Endothelial cell of umbilical vein (primary cell): ENCODE measurements at regions of chr3 and their contacts with region 1.

Region 1: GRCh38 chr3:133943639-133944141 is 48.0 kb upstream of the RAB6B start:
- DNase-seq: peak; percentile 87
- H3K4me3 ChIP-seq: no peak overlapping the region
- H3K27ac ChIP-seq: peak overlapping the region; percentile 88
- H3K4me1 ChIP-seq: peaks cover 66% of the 10 kb centered on the region
- H3K27me3 ChIP-seq: no peaks in the 10 kb centered on the region
- CTCF ChIP-seq: no peak
- POLR2A ChIP-seq: peak; percentile 31

Region 2: GRCh38 chr3:133644768-133645167 is 298.9 kb before region 1 on chr3:
- CTCF ChIA-PET with region 1: no interaction called
- POLR2A ChIA-PET with region 1: no interaction called
- dilution Hi-C with region 1: no loop called
- intact Hi-C with region 1: no loop called
- DNase-seq: peak; percentile 89
- H3K4me3 ChIP-seq: no peak overlapping the region
- H3K27ac ChIP-seq: peak overlapping the region; percentile 36
- H3K4me1 ChIP-seq: peaks cover 37% of the 10 kb centered on the region
- H3K27me3 ChIP-seq: no peaks in the 10 kb centered on the region
- CTCF ChIP-seq: no peak
- POLR2A ChIP-seq: no peak

Region 3: DNA sequence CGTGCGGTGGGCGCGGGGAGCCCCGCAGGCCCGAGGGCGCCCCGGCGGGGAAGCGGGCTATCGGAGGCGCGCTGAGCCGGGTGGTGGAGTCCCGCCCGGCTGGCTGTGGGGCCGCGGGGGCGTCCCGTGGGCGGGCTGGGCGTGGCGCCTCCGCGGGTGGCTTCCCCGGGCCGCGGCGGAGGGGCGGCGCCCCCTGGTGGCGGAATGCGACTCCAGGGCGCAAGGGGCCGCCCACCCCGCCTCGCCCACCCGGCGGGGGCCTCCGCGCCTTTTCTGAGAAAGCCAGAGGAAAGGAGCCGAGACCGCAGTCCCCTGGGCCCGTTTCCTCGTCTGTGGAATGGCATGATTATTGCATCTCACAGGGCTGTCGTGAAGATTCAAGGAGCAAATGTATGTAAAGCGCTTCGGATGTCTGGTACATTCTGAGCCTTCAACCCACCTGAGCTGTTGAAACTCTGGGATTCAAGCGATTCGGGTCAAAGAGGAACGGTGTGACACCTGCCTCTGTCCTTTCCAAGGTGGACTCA is 16.1 kb before region 1 on chr3:
- CTCF ChIA-PET with region 1: interaction called, 13 read pairs
- POLR2A ChIA-PET with region 1: no interaction called
- dilution Hi-C with region 1: no loop called
- intact Hi-C with region 1: no loop called
- DNase-seq: peak; percentile 37
- H3K4me3 ChIP-seq: peak overlapping the region; percentile 32 to 53 (median 39)
- H3K27ac ChIP-seq: no peak overlapping the region
- H3K4me1 ChIP-seq: peaks cover 7% of the 10 kb centered on the region
- H3K27me3 ChIP-seq: no peaks in the 10 kb centered on the region
- CTCF ChIP-seq: peak; percentile 70 to 87
- POLR2A ChIP-seq: no peak

Region 4: GRCh38 chr3:133964547-133964946 is 20.9 kb after region 1 on chr3:
- CTCF ChIA-PET with region 1: no interaction called
- POLR2A ChIA-PET with region 1: no interaction called
- dilution Hi-C with region 1: no loop called
- intact Hi-C with region 1: no loop called
- DNase-seq: no peak
- H3K4me3 ChIP-seq: no peak overlapping the region
- H3K27ac ChIP-seq: no peak overlapping the region
- H3K4me1 ChIP-seq: peaks cover 15% of the 10 kb centered on the region
- H3K27me3 ChIP-seq: no peaks in the 10 kb centered on the region
- CTCF ChIP-seq: peak; percentile 27 to 31
- POLR2A ChIP-seq: no peak

Region 5: DNA sequence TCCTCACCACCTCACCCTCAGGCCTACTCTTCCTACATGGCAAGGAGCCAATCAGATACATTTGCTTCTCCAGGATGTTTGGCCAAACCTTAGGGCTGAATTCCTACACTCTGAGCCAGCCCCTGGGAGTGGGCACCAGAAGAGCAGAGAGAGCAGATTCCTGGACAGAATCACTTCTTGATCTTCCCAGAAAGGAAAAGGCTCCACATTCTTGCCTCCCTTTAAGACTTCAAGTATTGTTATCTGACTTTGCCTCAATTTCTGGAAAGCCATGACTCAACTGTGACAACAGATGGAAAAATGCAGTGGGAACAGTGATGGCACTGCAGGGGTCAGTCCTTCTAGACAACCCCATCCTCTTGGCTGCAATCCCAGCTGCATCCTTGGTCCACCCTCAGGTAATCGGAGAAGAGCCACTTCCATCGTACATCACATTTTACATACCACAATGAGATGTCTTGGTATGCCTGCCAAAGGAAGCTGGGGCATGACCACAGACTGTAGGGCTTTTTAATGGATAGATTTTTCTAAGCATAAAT is 65.0 kb after region 1 on chr3:
- CTCF ChIA-PET with region 1: no interaction called
- POLR2A ChIA-PET with region 1: interaction called, 3 read pairs
- dilution Hi-C with region 1: no loop called
- intact Hi-C with region 1: loop called (anchors 1 kb)
- DNase-seq: peak; percentile 80
- H3K4me3 ChIP-seq: no peak overlapping the region
- H3K27ac ChIP-seq: peak overlapping the region; percentile 65
- H3K4me1 ChIP-seq: peaks cover 28% of the 10 kb centered on the region
- H3K27me3 ChIP-seq: no peaks in the 10 kb centered on the region
- CTCF ChIP-seq: no peak
- POLR2A ChIP-seq: no peak

Region 6: GRCh38 chr3:134039161-134039862 is 95.6 kb after region 1 on chr3:
- CTCF ChIA-PET with region 1: no interaction called
- POLR2A ChIA-PET with region 1: interaction called, 6 read pairs
- dilution Hi-C with region 1: no loop called
- intact Hi-C with region 1: loop called (anchors 2 kb)
- DNase-seq: no peak
- H3K4me3 ChIP-seq: no peak overlapping the region
- H3K27ac ChIP-seq: no peak overlapping the region
- H3K4me1 ChIP-seq: no peaks in the 10 kb centered on the region
- H3K27me3 ChIP-seq: no peaks in the 10 kb centered on the region
- CTCF ChIP-seq: peak; percentile 15 to 40
- POLR2A ChIP-seq: no peak

Region 7: GRCh38 chr3:134315286-134316106 is 371.8 kb after region 1 on chr3:
- CTCF ChIA-PET with region 1: no interaction called
- POLR2A ChIA-PET with region 1: no interaction called
- dilution Hi-C with region 1: no loop called
- intact Hi-C with region 1: loop called (anchors 2 kb)
- DNase-seq: peak; percentile 85
- H3K4me3 ChIP-seq: peak overlapping the region in 1 of 3 experiments; percentile 0
- H3K27ac ChIP-seq: peak overlapping the region; percentile 87
- H3K4me1 ChIP-seq: peaks cover 39% of the 10 kb centered on the region
- H3K27me3 ChIP-seq: no peaks in the 10 kb centered on the region
- CTCF ChIP-seq: no peak
- POLR2A ChIP-seq: peak; percentile 57

Region 8: DNA sequence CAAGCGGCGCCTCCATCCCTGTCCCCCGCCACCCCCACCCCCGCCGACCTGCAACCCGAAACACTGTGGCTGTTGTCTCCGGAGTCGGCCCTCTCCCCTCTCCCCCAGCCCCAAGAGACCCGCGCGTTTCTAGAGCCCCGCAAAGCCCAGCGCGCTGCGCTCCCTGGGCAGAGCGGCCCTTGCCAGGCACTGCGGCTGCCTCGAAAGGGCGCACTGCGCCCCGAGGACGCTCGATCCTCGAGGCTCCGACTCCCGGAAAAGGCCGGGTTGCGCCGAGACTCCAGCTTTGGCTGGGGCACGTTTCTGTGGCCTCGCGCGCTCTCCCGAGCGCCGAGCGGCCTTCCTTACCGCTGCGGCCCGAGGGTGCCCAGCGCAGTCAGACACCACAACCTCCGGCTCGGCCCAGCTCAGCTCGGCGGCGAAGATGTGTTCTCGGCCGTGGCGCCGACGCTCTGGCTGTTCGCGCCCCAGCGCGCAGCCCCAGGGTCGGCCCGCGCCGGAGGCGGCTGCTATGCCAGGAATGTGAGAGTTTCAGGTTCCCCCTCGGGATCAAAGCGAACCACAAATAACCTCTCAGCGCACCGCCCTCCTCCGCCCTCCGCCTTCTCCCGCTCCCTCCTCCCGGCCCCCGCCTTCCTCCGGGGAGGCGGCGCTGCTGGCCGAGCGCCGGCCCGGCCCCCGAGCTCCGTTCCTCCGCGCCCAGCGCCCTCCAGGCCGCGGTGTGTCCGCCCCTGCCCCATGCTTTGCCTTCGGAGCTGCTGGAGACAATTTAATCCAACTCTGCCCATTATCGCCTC is 430.5 kb after region 1 on chr3 and contains the start of gene AMOTL2:
- CTCF ChIA-PET with region 1: no interaction called
- POLR2A ChIA-PET with region 1: no interaction called
- dilution Hi-C with region 1: no loop called
- intact Hi-C with region 1: loop called (anchors 2 kb)
- DNase-seq: peak; percentile 93
- H3K4me3 ChIP-seq: peak within 1 kb of the TSS; percentile 65 to 93 (median 73)
- H3K27ac ChIP-seq: peak within 1 kb of the TSS; percentile 99
- H3K4me1 ChIP-seq: peaks cover 47% of the 10 kb centered on the region
- H3K27me3 ChIP-seq: no peaks in the 10 kb centered on the region
- CTCF ChIP-seq: no peak
- POLR2A ChIP-seq: peak; percentile 99
- total RNA-seq, gene AMOTL2: 145 and 167 TPM in 2 replicates